T-cell (primary cell): ENCODE measurements at regions of chr10 and their contacts with region 1.

Region 1: DNA sequence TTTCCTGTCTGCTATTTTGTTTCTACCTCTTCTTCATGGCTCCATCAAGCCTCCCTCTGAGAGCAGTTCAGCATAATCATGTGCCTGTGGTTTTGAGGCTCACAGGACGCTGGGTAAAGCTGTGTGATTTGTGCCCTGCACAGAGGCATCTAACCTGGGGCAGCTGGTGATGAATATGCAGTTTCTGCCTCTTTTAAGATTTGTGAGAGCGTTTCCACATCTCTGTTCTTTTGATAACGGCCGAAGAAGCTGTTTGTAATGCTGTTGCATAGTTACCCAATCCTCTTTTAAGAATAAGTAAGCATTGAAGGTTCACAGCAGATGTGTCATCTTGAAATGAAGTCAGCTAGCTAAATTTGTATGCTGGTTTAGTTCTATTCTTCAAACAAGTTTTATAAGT is 45.2 kb downstream of the PNLIPRP3 start:
- DNase-seq: no peak
- ATAC-seq: no peak
- H3K4me3 ChIP-seq: no peak overlapping the region
- H3K4me3 Mint-ChIP-seq: no peak overlapping the region
- H3K27ac ChIP-seq: no peak overlapping the region
- H3K27ac Mint-ChIP-seq: no peak overlapping the region
- H3K4me1 ChIP-seq: no peaks in the 10 kb centered on the region
- H3K4me1 Mint-ChIP-seq: no peaks in the 10 kb centered on the region
- H3K27me3 ChIP-seq: no peaks in the 10 kb centered on the region
- H3K27me3 Mint-ChIP-seq: peaks cover 2 to 9% of the 10 kb centered on the region in 2 donors

Region 2: DNA sequence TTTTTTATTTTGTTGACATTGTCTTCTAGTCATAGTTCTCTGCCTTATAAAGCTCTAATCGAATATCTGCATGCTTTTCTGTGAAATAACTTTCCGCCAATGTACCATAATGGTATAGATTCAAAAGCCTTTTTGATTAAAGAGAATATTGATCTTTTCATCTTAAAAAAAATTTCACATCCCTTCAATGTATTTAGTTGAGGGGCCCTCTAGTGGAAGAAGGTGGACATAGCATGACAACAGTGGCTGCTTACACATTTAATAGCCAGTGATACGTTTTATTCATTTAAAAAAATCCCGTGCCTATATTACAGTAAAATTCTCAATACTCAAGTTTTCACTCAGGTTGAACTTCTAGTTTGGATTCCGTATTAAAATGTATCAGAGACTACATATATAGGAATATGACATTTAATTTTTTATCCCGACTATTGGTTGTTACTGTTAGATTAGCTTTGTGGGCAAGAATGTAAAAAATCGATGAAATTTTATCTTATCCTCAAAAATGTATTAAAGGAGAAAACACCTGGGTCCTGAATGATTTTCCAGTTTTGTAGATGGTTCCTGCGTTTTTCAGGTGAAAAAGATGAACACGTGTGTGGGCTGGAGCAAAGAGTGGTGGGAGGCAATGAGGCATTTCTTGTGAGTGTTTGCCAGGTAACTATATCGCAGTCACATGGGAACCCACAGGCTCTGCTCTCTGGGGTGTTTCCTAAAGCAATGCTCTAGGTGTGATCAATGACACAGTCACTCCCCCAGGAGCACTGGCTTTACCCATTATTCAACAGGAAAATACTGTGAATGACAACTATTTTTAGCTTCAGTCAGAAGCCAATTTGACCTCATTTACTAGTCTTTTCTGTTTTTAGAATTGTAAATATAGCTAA is 48.8 kb after region 1 on chr10:
- CTCF ChIA-PET with region 1: no interaction called
- POLR2A ChIA-PET with region 1: no interaction called
- DNase-seq: peak in 4 of 35 experiments; percentile 2 to 37 (median 8)
- ATAC-seq: no peak
- H3K4me3 ChIP-seq: no peak overlapping the region
- H3K4me3 Mint-ChIP-seq: no peak overlapping the region
- H3K27ac ChIP-seq: no peak overlapping the region
- H3K27ac Mint-ChIP-seq: no peak overlapping the region
- H3K4me1 ChIP-seq: no peaks in the 10 kb centered on the region
- H3K4me1 Mint-ChIP-seq: no peaks in the 10 kb centered on the region
- H3K27me3 ChIP-seq: peaks cover 0 to 2% of the 10 kb centered on the region in 2 experiments
- H3K27me3 Mint-ChIP-seq: peaks cover 0 to 6% of the 10 kb centered on the region in 2 donors

Region 3: DNA sequence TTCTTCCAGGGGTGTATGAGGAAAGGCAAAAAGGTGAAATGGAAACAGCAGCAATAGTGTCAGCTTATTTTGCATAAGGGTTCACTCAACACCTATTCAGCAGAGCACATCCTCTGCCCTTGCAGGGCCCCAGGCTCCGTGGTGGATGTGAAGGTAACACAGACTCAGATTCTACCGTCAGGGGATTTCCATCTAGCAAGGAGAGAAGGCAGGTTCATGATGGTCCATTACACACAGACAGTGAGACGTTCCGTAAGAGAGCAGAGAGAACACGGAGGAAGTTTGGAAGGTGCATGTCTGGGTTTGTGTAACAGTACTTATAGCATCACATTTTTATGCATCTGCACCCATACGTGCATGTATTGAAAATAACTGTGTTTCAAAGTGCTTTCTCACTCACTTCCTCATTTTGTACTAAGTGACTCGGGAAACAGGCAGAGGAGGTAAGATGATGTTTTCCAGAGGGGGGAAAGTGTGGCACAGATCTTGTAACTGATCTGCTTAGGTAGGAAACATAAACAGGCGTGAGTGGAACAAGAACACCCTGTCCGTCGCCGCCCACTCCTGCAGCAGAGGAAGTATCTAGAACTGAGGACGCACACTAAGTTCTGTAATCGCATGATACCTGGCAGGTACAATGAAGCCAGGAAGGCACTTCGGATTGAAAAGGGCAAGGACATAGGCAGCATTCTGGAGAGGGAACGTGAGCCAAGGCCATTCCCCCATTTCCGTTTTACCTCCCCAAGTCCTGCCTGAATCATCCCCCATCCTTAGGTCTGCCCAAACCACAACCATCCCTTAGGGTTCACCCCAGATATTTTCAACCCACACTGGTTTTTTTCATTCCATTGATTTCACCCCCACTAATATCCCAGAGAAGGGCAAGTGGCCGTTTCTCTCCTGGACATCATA is 375.4 kb after region 1 on chr10:
- CTCF ChIA-PET with region 1: interaction called in 1 of 2 experiments, 12 read pairs
- POLR2A ChIA-PET with region 1: no interaction called
- DNase-seq: peak in 5 of 35 experiments; percentile 3 to 38 (median 9)
- ATAC-seq: peak in 3 of 4 experiments; percentile 19 to 76 (median 40)
- H3K4me3 ChIP-seq: peak overlapping the region in 1 of 2 donors; percentile 35
- H3K4me3 Mint-ChIP-seq: peak overlapping the region; percentile 2 to 63 (median 11)
- H3K27ac ChIP-seq: no peak overlapping the region
- H3K27ac Mint-ChIP-seq: no peak overlapping the region
- H3K4me1 ChIP-seq: peaks cover 0 to 10% of the 10 kb centered on the region in 2 experiments
- H3K4me1 Mint-ChIP-seq: peaks cover 5 to 20% (median 7%) of the 10 kb centered on the region in 3 donors
- H3K27me3 ChIP-seq: peaks cover 0 to 36% of the 10 kb centered on the region in 2 experiments
- H3K27me3 Mint-ChIP-seq: peaks cover 56 to 65% of the 10 kb centered on the region in 2 donors